GM12878 (cell line): ENCODE measurements at regions of chr18 and their contacts with region 1.

Region 1: GRCh38 chr18:23540867-23541266 is 37.6 kb downstream of the RMC1 start:
- DNase-seq: peak; percentile 43
- ATAC-seq: peak; percentile 83
- H3K4me3 ChIP-seq: no peak overlapping the region
- H3K27ac ChIP-seq: peak overlapping the region; percentile 47
- H3K4me1 ChIP-seq: peaks cover 31% of the 10 kb centered on the region
- H3K27me3 ChIP-seq: no peaks in the 10 kb centered on the region
- CTCF ChIP-seq: no peak
- EP300 ChIP-seq: peak in 1 of 2 experiments; percentile 48; a peak in 1 of 4 replicates
- POLR2A ChIP-seq: no peak
- RAD21 ChIP-seq: no peak

Region 2: DNA sequence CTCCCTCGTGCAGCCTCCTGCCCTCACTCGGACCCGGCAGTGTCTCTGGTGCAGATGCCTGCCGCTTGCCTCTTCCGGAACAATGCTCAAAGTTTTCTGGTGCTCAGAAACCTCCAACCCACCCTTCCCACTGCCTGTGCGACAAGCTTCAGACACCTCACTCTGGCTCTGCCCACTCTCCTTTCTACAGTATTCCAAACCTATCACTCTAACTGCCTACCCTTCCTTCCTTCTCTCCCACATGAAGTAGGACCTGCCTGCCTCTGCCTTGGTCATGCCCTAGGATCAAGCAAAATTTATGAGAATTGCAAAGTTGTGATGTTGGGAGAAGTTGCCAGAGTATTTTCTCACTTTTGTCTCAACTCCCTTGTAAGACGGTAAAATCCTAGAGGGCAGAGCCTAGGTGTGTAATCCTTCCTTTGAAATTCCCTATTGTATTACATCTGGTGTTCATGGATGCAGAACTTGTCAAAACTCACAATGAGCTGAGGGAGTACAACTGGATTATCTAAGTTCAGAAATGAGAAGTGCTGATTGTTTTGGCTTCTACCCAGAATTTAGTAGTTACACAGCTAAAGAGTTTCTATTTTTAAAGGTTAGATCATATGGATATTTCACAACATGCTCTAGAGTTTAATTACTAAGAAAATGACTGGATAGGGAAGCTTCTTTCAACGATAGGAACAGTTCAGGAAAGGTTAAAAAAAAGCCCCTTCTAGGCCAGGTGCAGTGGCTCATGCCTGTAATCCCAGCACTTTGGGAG is 38.2 kb after region 1 on chr18:
- CTCF ChIA-PET with region 1: interaction called, 7 read pairs
- POLR2A ChIA-PET with region 1: no interaction called
- RAD21 ChIA-PET with region 1: no interaction called
- SMC1A ChIA-PET with region 1: no interaction called
- in situ Hi-C with region 1: no loop called
- intact Hi-C with region 1: loop called (anchors 5 kb)
- DNase-seq: no peak
- ATAC-seq: no peak
- H3K4me3 ChIP-seq: no peak overlapping the region
- H3K27ac ChIP-seq: no peak overlapping the region
- H3K4me1 ChIP-seq: peaks cover 24% of the 10 kb centered on the region
- H3K27me3 ChIP-seq: no peaks in the 10 kb centered on the region
- CTCF ChIP-seq: no peak
- EP300 ChIP-seq: no peak
- POLR2A ChIP-seq: no peak
- RAD21 ChIP-seq: no peak

Region 3: GRCh38 chr18:23650968-23651927 is 110.4 kb after region 1 on chr18:
- CTCF ChIA-PET with region 1: no interaction called
- POLR2A ChIA-PET with region 1: no interaction called
- RAD21 ChIA-PET with region 1: no interaction called
- SMC1A ChIA-PET with region 1: no interaction called
- in situ Hi-C with region 1: no loop called
- intact Hi-C with region 1: no loop called
- DNase-seq: no peak
- ATAC-seq: no peak
- H3K4me3 ChIP-seq: no peak overlapping the region
- H3K27ac ChIP-seq: no peak overlapping the region
- H3K4me1 ChIP-seq: no peaks in the 10 kb centered on the region
- H3K27me3 ChIP-seq: no peaks in the 10 kb centered on the region; a peak in 2 of 4 replicates
- CTCF ChIP-seq: no peak
- EP300 ChIP-seq: no peak
- POLR2A ChIP-seq: no peak
- RAD21 ChIP-seq: no peak

Region 4: DNA sequence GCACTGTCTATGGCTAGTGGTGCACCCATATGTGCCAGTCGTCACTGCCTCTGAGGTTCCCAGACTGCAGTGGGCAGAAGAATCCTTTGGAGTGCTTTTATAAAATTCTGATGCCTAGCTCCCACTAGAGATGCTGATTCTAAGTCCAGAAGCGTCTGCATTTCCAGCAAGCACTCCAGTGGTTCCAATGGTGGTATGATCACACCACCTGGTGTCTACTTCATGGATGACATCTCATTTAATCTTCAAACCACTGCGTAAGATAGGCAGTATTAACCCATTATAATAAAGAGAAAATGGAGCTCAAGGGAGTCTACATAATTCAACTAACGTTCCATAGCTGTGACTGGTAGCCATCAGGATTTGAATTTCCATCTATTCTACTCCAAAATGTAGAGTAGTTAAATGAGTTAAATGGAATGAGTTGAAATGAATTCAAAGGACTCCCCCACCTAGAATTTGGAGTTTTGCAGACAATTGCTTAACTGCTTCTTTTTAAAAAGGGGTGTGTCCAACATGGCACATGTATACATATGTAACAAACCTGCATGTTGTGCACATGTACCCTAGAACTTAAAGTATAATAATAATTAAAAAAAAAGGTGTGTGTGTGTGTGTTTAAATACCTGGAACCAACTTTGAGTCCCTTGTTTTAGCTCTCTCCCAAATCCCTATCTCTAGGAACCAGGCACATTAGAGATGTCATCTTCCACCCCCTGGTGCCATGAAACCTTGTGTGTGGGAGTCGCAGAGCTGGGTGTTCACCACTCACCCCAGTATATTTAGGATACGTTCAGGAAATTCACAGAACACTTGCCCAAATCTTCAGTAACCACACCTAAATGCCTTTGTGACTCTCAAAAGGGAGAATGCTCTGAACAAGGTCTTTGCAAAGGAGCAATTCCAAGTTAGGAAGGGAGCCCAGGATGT is 162.5 kb after region 1 on chr18:
- CTCF ChIA-PET with region 1: interaction called, 10 read pairs
- POLR2A ChIA-PET with region 1: no interaction called
- RAD21 ChIA-PET with region 1: interaction called, 4 read pairs
- SMC1A ChIA-PET with region 1: interaction called, 10 read pairs
- in situ Hi-C with region 1: no loop called
- intact Hi-C with region 1: no loop called
- DNase-seq: no peak
- ATAC-seq: peak; percentile 92
- H3K4me3 ChIP-seq: no peak overlapping the region
- H3K27ac ChIP-seq: no peak overlapping the region
- H3K4me1 ChIP-seq: no peaks in the 10 kb centered on the region
- H3K27me3 ChIP-seq: no peaks in the 10 kb centered on the region
- CTCF ChIP-seq: peak; percentile 35 to 79 (median 41); a peak in 5 of 6 replicates
- EP300 ChIP-seq: no peak
- POLR2A ChIP-seq: no peak
- RAD21 ChIP-seq: peak; percentile 95